Activated CD4-positive, alpha-beta T cell treated with anti-CD3 and anti-CD28 coated beads, Interleukin-2, amount 10 ng/mL, durations not matched to agents 24 days and 14 days (primary cell): ENCODE measurements at regions of chr9 and their contacts with region 1.

Region 1: DNA sequence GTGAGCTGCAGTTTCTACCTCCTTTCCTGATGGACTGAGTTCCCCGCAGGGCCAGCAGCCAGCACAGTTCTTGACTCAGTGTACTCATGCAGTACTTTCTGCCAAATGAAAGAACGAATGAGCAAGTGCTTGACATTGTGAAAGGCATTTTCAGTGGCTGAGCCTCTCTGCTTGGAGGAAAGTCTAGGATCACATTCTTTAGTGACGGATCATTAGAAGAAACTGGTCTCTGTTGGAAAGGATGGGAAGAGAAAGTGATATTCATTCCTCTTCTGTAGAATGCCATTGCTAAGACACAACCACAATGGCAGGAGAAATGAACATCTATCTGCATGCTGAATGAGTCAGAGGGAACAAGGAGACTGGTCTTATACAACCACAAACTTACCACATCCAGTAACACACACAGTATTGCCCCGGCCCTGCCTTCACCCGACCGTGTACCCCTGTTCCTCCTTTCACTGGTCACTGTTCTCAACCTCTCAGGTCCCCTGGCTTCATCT is 206.9 kb downstream of the CRB2 start:
- DNase-seq: peak; percentile 59
- H3K4me3 Mint-ChIP-seq: no peak overlapping the region
- H3K27ac Mint-ChIP-seq: no peak overlapping the region
- H3K4me1 Mint-ChIP-seq: peaks cover 16% of the 10 kb centered on the region
- H3K27me3 Mint-ChIP-seq: no peaks in the 10 kb centered on the region

Region 2: DNA sequence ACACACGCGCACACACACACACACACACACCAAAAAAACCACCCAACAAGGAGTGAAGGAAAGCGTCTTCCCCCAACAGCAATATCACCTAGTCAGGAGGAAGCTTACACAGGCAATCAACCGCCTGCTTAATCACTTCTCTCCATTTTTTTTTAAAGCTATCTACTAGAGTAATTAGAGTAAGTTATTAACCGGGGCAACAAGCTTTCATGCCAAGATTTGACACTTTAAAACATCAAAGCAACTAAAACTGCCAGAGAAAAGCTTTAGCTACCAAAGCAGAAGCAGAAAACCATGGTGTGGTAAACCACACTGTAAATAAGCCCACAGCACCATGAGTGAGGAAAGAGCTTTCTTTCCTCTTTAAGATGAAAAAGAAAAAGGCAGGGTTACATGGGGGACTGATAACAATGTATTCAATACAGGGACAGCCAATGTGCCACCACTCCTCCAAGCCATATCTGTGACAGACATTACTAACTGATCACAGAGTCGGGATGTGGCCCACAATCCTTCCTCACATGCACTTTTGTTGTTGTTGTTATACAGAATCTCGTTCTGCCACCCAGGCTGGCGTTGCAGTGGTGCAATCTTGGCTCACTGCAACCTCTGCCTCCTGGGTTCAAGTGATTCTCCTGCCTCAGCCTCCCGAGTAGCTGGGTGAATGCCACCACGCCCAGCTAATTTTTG is 75.2 kb after region 1 on chr9:
- intact Hi-C with region 1: loop called (anchors 5 kb)
- DNase-seq: peak; percentile 84
- H3K4me3 Mint-ChIP-seq: peak overlapping the region; percentile 77
- H3K27ac Mint-ChIP-seq: peak overlapping the region; percentile 13
- H3K4me1 Mint-ChIP-seq: peaks cover 34% of the 10 kb centered on the region
- H3K27me3 Mint-ChIP-seq: peaks cover 26% of the 10 kb centered on the region